ENCODE measurements at regions of chrX and their contacts with region 1.

Region 1: GRCh38 chrX:25156323-25156722 is 140.6 kb upstream of the ARX start:
- DNase-seq: no peak
- H3K4me3 ChIP-seq: no peak overlapping the region
- H3K27ac ChIP-seq: no peak overlapping the region
- H3K4me1 ChIP-seq: no peaks in the 10 kb centered on the region
- H3K27me3 ChIP-seq: no peaks in the 10 kb centered on the region
- CTCF ChIP-seq: no peak

Region 2: DNA sequence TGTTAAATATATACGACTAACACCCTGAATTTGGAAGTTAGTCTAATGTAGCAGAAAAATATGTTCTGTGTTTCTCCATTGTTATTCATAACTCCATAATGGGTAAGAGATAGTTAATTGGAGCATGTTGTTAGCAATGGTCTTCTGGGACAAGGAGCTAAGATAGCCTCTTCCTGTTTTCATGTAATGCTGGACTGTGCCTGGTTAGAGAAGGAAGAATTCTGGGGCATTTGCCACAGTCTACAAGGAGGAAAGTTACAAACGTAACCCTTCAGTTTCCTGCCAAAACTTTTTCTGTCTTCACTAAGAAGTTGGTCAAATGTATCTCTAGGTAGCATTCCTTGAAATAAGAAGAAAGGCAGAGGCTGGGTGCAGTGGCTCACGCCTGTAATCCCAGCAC is 1483.2 kb before region 1 on chrX:
- intact Hi-C with region 1: loop called (anchors 5 kb)
- DNase-seq: no peak
- H3K4me3 ChIP-seq: no peak overlapping the region
- H3K27ac ChIP-seq: no peak overlapping the region
- H3K4me1 ChIP-seq: peaks cover 0 to 5% (median 0%) of the 10 kb centered on the region in 4 donors
- H3K27me3 ChIP-seq: no peaks in the 10 kb centered on the region
- CTCF ChIP-seq: no peak

Measured in tibial artery (tissue), 4 donors.